CD14-positive monocyte (primary cell): ENCODE measurements at regions of chr1 and their contacts with region 1.

Region 1: DNA sequence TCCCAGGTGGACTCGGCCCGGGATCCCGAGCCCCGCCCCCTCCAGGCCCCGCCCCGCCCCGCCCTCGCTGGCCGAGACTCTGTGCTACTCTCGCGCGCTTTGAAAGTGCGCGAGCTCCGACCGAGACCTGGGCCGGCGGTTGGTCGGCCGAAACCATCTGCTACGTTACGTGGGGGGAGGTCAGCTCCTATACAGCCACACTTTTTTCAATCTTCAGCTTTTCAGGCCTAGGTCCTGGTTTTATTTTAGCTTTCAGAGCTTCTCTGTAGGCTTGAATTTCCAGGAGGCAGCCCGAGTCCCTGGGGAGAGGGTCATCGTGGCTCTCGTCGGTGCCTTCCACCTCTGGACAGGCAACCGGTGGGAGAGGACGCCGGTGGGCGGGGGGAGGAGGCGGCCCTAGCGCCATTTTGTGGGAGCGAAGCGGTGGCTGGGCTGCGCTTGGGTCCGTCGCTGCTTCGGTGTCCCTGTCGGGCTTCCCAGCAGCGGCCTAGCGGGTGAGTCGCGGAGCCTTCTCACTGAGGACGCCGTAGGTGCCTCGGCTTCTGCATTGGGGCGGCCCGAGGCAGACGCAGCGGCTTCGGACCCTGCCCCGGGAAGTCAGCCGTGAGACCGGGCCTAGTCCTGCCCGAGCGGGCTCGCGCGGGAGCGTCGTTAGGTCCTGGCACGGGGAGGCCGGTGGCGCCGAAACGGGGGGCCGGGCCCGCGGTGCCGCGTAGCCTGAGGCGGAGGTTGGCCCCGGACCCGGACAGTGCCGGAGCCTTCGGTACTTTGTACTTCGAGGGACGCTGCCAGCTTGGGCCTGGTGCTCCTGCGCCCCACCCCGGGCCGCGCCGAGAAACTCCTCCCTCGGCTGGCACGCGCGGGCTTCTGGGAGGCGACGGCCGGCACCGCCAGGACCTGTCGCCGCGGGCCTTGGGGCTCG is at the start of gene TARDBP:
- DNase-seq: peak; percentile 87 to 90 (median 88)
- H3K4me3 ChIP-seq: peak within 1 kb of the TSS; percentile 52 to 97 (median 75)
- H3K4me3 Mint-ChIP-seq: peak within 1 kb of the TSS; percentile 86 to 90
- H3K27ac ChIP-seq: peak within 1 kb of the TSS; percentile 86 to 98
- H3K27ac Mint-ChIP-seq: peak within 1 kb of the TSS; percentile 97 to 99 (median 99)
- H3K4me1 ChIP-seq: peaks cover 15 to 23% of the 10 kb centered on the region in 2 donors
- H3K4me1 Mint-ChIP-seq: peaks cover 17% of the 10 kb centered on the region
- H3K27me3 ChIP-seq: no peaks in the 10 kb centered on the region
- H3K27me3 Mint-ChIP-seq: peaks cover 0 to 3% (median 1%) of the 10 kb centered on the region in 3 donors
- CTCF ChIP-seq: no peak
- polyA plus RNA-seq, gene TARDBP: 49.4 to 79.5 (median 61.4) TPM

Region 2: DNA sequence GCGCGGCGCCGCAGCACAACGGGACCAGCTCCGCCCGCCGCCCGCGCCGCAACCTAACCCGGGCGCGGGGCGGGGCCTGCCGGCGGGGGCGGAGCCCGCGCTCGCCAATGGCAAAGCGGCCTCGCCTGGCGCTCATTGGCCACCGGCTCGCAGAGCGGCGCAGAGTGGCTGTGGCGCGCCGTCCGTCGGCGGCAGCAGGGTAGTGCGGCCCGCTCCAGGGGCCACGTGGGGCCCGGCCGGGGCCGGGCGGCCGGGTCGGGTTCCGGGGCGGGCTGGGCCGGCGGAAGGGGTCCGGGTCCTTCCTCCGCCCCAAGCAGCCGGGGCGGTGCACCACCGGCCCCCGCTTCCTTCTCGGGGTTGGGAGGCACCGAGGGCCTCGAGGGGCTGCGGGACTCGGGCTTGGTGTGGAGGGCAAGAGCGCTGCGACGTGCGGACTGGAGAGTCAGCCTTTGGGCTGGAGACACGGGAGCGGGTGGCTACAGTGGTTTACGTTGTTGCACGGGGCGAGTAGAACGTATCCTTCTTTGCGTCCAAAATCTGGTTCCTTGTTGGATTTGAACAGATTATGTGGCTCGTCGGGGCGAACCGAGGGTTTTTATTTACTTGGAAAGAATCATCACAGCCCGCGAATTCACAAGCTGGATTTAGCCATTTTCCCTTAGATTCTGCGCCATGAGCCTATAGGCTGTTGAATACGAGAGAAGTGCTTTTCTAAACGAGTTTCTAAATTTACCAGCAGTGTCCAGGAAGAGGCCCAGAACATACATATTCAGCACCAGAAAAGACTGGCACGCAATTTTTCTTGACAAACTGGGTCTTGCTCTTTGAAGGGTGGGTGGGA is 47.7 kb after region 1 on chr1 and contains the start of gene SRM:
- intact Hi-C with region 1: loop called in 1 of 2 experiments (anchors 2 kb)
- DNase-seq: peak; percentile 77 to 90 (median 83)
- H3K4me3 ChIP-seq: peak within 1 kb of the TSS; percentile 82 to 97 (median 96)
- H3K4me3 Mint-ChIP-seq: peak within 1 kb of the TSS; percentile 93 to 97
- H3K27ac ChIP-seq: peak within 1 kb of the TSS; percentile 33 to 75
- H3K27ac Mint-ChIP-seq: peak within 1 kb of the TSS; percentile 46 to 90 (median 78)
- H3K4me1 ChIP-seq: peaks cover 16 to 23% of the 10 kb centered on the region in 2 donors
- H3K4me1 Mint-ChIP-seq: peaks cover 21% of the 10 kb centered on the region
- H3K27me3 ChIP-seq: no peaks in the 10 kb centered on the region
- H3K27me3 Mint-ChIP-seq: no peaks in the 10 kb centered on the region
- CTCF ChIP-seq: peak; percentile 52
- polyA plus RNA-seq, gene SRM: 23.2 to 43.2 (median 37.6) TPM

Region 3: DNA sequence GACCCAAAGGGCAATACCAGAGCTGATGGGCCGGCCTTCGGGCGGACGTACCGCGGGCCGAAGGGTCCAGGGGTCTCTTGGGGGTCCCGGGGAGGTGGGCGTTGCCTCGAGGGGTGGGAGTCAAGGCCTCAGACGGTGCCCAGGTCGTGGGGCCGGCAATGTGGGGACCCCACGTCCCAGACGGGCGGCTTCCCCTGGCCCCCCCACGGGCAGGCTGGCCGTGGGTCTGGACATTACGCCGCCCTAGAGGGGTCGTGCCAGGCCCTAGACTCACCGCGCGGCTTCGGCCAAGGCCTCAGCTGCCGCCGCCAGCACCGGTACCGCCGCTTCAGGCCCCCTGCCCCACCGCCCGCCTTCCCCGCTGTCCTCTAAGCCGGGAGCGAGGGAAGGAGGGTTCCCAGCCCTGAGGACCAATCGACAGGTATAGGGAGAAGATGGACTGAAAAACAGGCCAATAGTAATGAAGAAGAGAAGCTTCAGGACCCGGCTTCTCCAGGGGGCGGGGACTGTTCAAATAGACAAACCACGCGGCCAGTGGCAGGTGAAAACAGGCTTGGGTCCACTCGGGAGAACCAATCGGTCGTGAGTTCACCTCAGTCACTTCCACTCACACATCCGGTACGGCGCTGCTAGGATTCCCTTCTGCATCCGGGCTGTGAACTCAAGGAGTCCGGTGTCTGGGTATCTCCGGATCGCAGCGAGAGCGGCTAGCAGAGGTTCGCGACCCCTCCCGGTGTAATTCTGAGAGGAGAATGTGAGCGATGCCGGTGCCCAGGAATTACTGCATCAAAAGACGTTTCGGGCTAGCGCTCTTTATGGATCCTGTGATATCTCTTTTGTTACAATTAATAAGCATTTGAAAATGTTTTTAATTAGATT is 249.9 kb after region 1 on chr1 and contains the start of gene MTOR:
- intact Hi-C with region 1: loop called in 1 of 2 experiments (anchors 10 kb)
- DNase-seq: peak; percentile 98 to 100 (median 99)
- H3K4me3 ChIP-seq: peak within 1 kb of the TSS; percentile 89 to 95 (median 90)
- H3K4me3 Mint-ChIP-seq: peak within 1 kb of the TSS; percentile 83 to 97
- H3K27ac ChIP-seq: peak within 1 kb of the TSS; percentile 25 to 69
- H3K27ac Mint-ChIP-seq: peak within 1 kb of the TSS; percentile 78 to 93 (median 87)
- H3K4me1 ChIP-seq: peaks cover 14 to 16% of the 10 kb centered on the region in 2 donors
- H3K4me1 Mint-ChIP-seq: peaks cover 11% of the 10 kb centered on the region
- H3K27me3 ChIP-seq: no peaks in the 10 kb centered on the region
- H3K27me3 Mint-ChIP-seq: peaks cover 1 to 7% (median 2%) of the 10 kb centered on the region in 3 donors
- CTCF ChIP-seq: no peak
- polyA plus RNA-seq, gene MTOR: 2.0 to 29.4 (median 3.3) TPM

Region 4: DNA sequence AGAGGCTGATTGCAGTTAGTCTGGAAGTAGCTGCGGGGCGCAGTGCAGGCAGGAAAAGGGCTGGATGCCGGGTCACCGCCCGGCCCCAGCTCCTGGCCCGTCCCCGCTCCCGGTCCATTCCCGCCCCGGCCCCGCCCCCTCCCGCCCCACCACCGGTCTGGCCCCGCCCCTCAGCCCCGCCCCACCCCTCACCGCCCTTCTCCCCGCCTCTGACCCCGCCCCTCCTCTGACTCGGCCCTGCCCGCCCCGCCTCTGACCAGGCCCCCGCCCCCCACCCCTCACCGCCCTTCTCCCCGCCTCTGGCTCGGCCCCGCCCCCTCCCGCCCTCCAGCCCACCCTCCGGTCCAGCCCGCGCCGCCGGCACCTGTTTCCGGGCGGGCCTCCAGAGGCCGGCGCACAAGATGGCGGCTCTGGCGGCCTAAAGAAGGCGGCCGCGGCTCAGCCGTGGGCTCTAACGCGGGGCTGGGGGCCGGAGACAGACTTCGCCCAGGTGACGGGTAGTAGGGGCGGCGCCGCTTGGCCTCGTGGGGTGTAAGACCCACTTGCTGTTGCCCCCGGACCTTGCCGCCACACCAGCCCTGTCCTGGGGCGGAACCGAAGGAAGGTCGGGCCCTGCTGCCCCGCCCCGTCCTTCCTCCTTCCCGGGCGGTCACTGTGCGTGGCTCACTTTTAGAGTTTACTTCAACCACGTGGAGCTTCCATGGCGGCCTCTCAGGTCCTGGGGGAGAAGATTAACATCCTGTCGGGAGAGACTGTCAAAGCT is 260.5 kb after region 1 on chr1 and contains the start of gene UBIAD1:
- intact Hi-C with region 1: loop called (anchors 5 to 10 kb)
- DNase-seq: peak; percentile 74 to 88 (median 84)
- H3K4me3 ChIP-seq: peak within 1 kb of the TSS; percentile 69 to 95 (median 84)
- H3K4me3 Mint-ChIP-seq: peak within 1 kb of the TSS; percentile 82 to 87
- H3K27ac ChIP-seq: peak within 1 kb of the TSS; percentile 84 to 94
- H3K27ac Mint-ChIP-seq: peak within 1 kb of the TSS; percentile 79 to 94 (median 87)
- H3K4me1 ChIP-seq: peaks cover 25 to 29% of the 10 kb centered on the region in 2 donors
- H3K4me1 Mint-ChIP-seq: peaks cover 27% of the 10 kb centered on the region
- H3K27me3 ChIP-seq: no peaks in the 10 kb centered on the region
- H3K27me3 Mint-ChIP-seq: peaks cover 0 to 4% (median 0%) of the 10 kb centered on the region in 3 donors
- CTCF ChIP-seq: no peak
- polyA plus RNA-seq, gene UBIAD1: 4.3 to 10.5 (median 9.8) TPM